GM23248 (cell line): ENCODE measurements at regions of chr11 and their contacts with region 1.

Region 1: GRCh38 chr11:34454308-34455032 is 15.7 kb downstream of the CAT start:
- DNase-seq: no peak
- H3K4me3 ChIP-seq: no peak overlapping the region
- H3K27ac ChIP-seq: no peak overlapping the region
- H3K4me1 ChIP-seq: no peaks in the 10 kb centered on the region
- H3K27me3 ChIP-seq: no peaks in the 10 kb centered on the region

Region 2: GRCh38 chr11:34331329-34331728 is 123.1 kb before region 1 on chr11:
- in situ Hi-C with region 1: no loop called
- DNase-seq: peak; percentile 89
- H3K4me3 ChIP-seq: no peak overlapping the region
- H3K27ac ChIP-seq: peak overlapping the region; percentile 40
- H3K4me1 ChIP-seq: peaks cover 17% of the 10 kb centered on the region
- H3K27me3 ChIP-seq: no peaks in the 10 kb centered on the region

Region 3: DNA sequence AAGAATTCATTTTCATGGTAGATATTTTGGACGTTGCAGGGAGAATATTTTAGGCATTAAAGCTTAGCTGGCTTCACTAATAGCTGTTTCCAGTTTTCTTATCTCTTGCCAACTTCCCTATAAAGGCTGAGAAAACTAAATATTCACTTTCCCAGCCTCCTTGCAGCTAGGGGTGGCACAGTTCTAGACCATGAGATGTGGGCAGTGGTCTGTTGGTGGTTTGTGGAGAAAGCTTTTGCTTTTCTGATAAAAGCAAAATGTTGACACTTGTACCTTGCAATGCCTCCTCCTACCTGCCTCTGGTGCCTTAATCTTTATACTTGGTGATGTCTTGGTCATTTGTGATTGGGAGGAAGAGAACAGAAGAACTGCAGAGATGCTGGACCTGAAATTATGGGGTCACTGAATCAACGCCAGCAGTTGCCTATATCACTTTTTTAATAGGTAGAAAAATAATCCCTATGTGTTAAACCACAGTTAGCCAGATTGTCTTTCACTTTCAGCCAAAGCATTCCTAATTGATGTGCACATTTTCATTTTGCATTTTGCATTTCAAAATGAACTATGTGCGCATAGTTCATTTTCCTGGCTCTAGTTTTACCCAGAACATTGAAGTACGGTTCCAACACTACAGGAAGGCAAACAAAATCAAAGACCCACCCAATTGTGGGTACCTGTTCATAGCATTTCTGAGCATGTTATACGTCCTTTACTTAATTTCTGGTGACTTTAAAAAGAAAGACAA is 71.8 kb before region 1 on chr11:
- in situ Hi-C with region 1: no loop called
- DNase-seq: no peak
- H3K4me3 ChIP-seq: no peak overlapping the region
- H3K27ac ChIP-seq: no peak overlapping the region
- H3K4me1 ChIP-seq: peaks cover 23% of the 10 kb centered on the region
- H3K27me3 ChIP-seq: 0 out of 2 replicates have a peak, but pooled peaks cover 16% of the 10 kb centered on the region

Region 4: GRCh38 chr11:34395916-34396550 is 58.4 kb before region 1 on chr11:
- in situ Hi-C with region 1: loop called (anchors 10 kb)
- DNase-seq: peak; percentile 85
- H3K4me3 ChIP-seq: no peak overlapping the region
- H3K27ac ChIP-seq: no peak overlapping the region
- H3K4me1 ChIP-seq: peaks cover 10% of the 10 kb centered on the region
- H3K27me3 ChIP-seq: peaks cover 26% of the 10 kb centered on the region

Region 5: GRCh38 chr11:34706709-34707461 is 252.4 kb after region 1 on chr11:
- in situ Hi-C with region 1: no loop called
- DNase-seq: no peak
- H3K4me3 ChIP-seq: no peak overlapping the region
- H3K27ac ChIP-seq: no peak overlapping the region
- H3K4me1 ChIP-seq: no peaks in the 10 kb centered on the region
- H3K27me3 ChIP-seq: peaks cover 13% of the 10 kb centered on the region